ENCODE measurements at regions of chr12 and their contacts with region 1.

Region 1: GRCh38 chr12:39619660-39620433 is at the start of gene ABCD2:
- DNase-seq: peak; percentile 88
- H3K4me3 Mint-ChIP-seq: no peak within 1 kb of the TSS
- H3K27ac Mint-ChIP-seq: no peak within 1 kb of the TSS
- H3K4me1 Mint-ChIP-seq: peaks cover 27% of the 10 kb centered on the region
- H3K27me3 Mint-ChIP-seq: no peaks in the 10 kb centered on the region
- total RNA-seq, gene ABCD2: 8.6 to 9.1 TPM

Region 2: DNA sequence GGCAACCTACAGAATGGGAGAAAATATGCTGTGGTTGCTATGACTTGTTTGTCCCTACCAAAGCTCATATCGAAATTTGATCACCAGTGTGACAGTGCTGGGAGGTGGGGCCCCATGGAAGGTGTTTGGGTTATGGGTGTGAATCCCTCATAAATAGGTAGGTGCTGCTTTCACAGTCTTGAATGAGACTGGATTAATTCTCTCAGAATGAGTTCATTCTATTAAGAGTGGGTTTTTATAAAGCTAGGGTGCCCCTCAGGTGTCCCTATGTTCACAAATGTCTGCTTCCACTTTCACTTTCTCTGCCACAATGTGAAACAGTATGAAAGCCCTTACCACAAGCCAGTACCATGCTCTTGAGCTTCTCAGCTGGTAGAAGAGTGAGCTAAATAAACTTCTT is 848.0 kb before region 1 on chr12:
- CTCF ChIA-PET with region 1: no interaction called
- intact Hi-C with region 1: loop called (anchors 10 kb)
- DNase-seq: peak; percentile 34
- H3K4me3 Mint-ChIP-seq: no peak overlapping the region
- H3K27ac Mint-ChIP-seq: no peak overlapping the region
- H3K4me1 Mint-ChIP-seq: peaks cover 6% of the 10 kb centered on the region
- H3K27me3 Mint-ChIP-seq: no peaks in the 10 kb centered on the region

Region 3: GRCh38 chr12:39341179-39341578 is 278.7 kb before region 1 on chr12:
- CTCF ChIA-PET with region 1: no interaction called
- intact Hi-C with region 1: no loop called
- DNase-seq: no peak
- H3K4me3 Mint-ChIP-seq: no peak overlapping the region
- H3K27ac Mint-ChIP-seq: no peak overlapping the region
- H3K4me1 Mint-ChIP-seq: peaks cover 11% of the 10 kb centered on the region
- H3K27me3 Mint-ChIP-seq: no peaks in the 10 kb centered on the region

Region 4: GRCh38 chr12:39365364-39366001 is 254.4 kb before region 1 on chr12:
- CTCF ChIA-PET with region 1: no interaction called
- intact Hi-C with region 1: loop called (anchors 2 kb)
- DNase-seq: no peak
- H3K4me3 Mint-ChIP-seq: no peak overlapping the region
- H3K27ac Mint-ChIP-seq: no peak overlapping the region
- H3K4me1 Mint-ChIP-seq: no peaks in the 10 kb centered on the region
- H3K27me3 Mint-ChIP-seq: no peaks in the 10 kb centered on the region

Region 5: GRCh38 chr12:39467432-39467870 is 152.4 kb before region 1 on chr12:
- CTCF ChIA-PET with region 1: no interaction called
- intact Hi-C with region 1: loop called (anchors 1 kb)
- DNase-seq: peak; percentile 32
- H3K4me3 Mint-ChIP-seq: no peak overlapping the region
- H3K27ac Mint-ChIP-seq: peak overlapping the region; percentile 46
- H3K4me1 Mint-ChIP-seq: peaks cover 18% of the 10 kb centered on the region
- H3K27me3 Mint-ChIP-seq: no peaks in the 10 kb centered on the region

Region 6: GRCh38 chr12:39682689-39683477 is 63.0 kb after region 1 on chr12:
- CTCF ChIA-PET with region 1: interaction called, 3 read pairs
- intact Hi-C with region 1: loop called (anchors 1 kb)
- DNase-seq: no peak
- H3K4me3 Mint-ChIP-seq: peak overlapping the region; percentile 75
- H3K27ac Mint-ChIP-seq: peak overlapping the region; percentile 90
- H3K4me1 Mint-ChIP-seq: peaks cover 29% of the 10 kb centered on the region
- H3K27me3 Mint-ChIP-seq: no peaks in the 10 kb centered on the region

Region 7: GRCh38 chr12:40137252-40137651 is 517.4 kb after region 1 on chr12:
- CTCF ChIA-PET with region 1: no interaction called
- intact Hi-C with region 1: loop called (anchors 1 kb)
- DNase-seq: peak; percentile 20
- H3K4me3 Mint-ChIP-seq: no peak overlapping the region
- H3K27ac Mint-ChIP-seq: no peak overlapping the region
- H3K4me1 Mint-ChIP-seq: peaks cover 7% of the 10 kb centered on the region
- H3K27me3 Mint-ChIP-seq: peaks cover 6% of the 10 kb centered on the region

Measured in activated naive CD4-positive, alpha-beta T cell treated with anti-CD3 and anti-CD28 coated beads for 36 hours (primary cell).